Naive thymus-derived CD4-positive, alpha-beta T cell (primary cell): ENCODE measurements at regions of chr14 and their contacts with region 1.

Region 1: DNA sequence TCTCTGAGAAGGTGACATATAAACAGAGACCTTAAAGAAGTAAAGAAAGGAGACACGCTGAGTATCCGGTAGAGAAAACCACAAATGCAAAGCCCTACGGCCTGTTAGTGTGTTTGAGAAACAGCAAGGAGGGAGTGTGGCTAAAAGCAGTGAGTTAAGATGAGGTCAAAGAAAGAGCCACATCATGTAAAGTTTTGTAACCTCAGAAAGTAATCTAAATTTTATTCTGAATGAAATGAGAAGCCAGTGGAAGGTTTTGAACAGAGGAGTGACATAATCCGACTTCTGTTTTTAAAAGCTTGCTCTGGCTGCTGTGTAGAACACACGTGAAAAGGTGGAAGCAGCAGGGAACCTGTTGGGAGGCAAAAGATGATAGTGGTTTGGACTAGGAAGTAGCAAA is 32.6 kb downstream of the PPP2R5E start:
- DNase-seq: peak in 3 of 9 donors; percentile 31 to 42 (median 42)
- ATAC-seq: peak; percentile 81
- H3K4me3 ChIP-seq: no peak overlapping the region
- H3K4me3 Mint-ChIP-seq: peak overlapping the region in 9 of 10 donors; percentile 13 to 75 (median 54)
- H3K27ac ChIP-seq: no peak overlapping the region
- H3K27ac Mint-ChIP-seq: peak overlapping the region; percentile 18 to 84 (median 68)
- H3K4me1 ChIP-seq: peaks cover 15 to 27% of the 10 kb centered on the region in 2 donors
- H3K4me1 Mint-ChIP-seq: peaks cover 51 to 83% (median 68%) of the 10 kb centered on the region in 7 donors
- H3K27me3 ChIP-seq: no peaks in the 10 kb centered on the region
- H3K27me3 Mint-ChIP-seq: no peaks in the 10 kb centered on the region

Region 2: GRCh38 chr14:63392236-63392635 is 118.3 kb before region 1 on chr14:
- CTCF ChIA-PET with region 1: no interaction called
- POLR2A ChIA-PET with region 1: no interaction called
- intact Hi-C with region 1: no loop called
- DNase-seq: no peak
- ATAC-seq: no peak
- H3K4me3 ChIP-seq: no peak overlapping the region
- H3K4me3 Mint-ChIP-seq: no peak overlapping the region
- H3K27ac ChIP-seq: no peak overlapping the region
- H3K27ac Mint-ChIP-seq: no peak overlapping the region
- H3K4me1 ChIP-seq: no peaks in the 10 kb centered on the region
- H3K4me1 Mint-ChIP-seq: peaks cover 0 to 5% (median 0%) of the 10 kb centered on the region in 7 donors
- H3K27me3 ChIP-seq: no peaks in the 10 kb centered on the region
- H3K27me3 Mint-ChIP-seq: no peaks in the 10 kb centered on the region

Region 3: GRCh38 chr14:63478010-63478409 is 32.5 kb before region 1 on chr14:
- CTCF ChIA-PET with region 1: no interaction called
- POLR2A ChIA-PET with region 1: no interaction called
- intact Hi-C with region 1: loop called in 1 of 2 experiments (anchors 5 kb)
- DNase-seq: peak in 1 of 9 donors; percentile 14
- ATAC-seq: peak; percentile 60
- H3K4me3 ChIP-seq: peak overlapping the region; percentile 31
- H3K4me3 Mint-ChIP-seq: peak overlapping the region in 8 of 10 donors; percentile 22 to 75 (median 64)
- H3K27ac ChIP-seq: no peak overlapping the region
- H3K27ac Mint-ChIP-seq: peak overlapping the region in 4 of 9 donors; percentile 5 to 80 (median 57)
- H3K4me1 ChIP-seq: peaks cover 4 to 16% of the 10 kb centered on the region in 2 donors
- H3K4me1 Mint-ChIP-seq: peaks cover 21 to 60% (median 51%) of the 10 kb centered on the region in 7 donors
- H3K27me3 ChIP-seq: no peaks in the 10 kb centered on the region
- H3K27me3 Mint-ChIP-seq: no peaks in the 10 kb centered on the region